CD8-positive, alpha-beta T cell (primary cell): ENCODE measurements at regions of chr11 and their contacts with region 1.

Region 1: DNA sequence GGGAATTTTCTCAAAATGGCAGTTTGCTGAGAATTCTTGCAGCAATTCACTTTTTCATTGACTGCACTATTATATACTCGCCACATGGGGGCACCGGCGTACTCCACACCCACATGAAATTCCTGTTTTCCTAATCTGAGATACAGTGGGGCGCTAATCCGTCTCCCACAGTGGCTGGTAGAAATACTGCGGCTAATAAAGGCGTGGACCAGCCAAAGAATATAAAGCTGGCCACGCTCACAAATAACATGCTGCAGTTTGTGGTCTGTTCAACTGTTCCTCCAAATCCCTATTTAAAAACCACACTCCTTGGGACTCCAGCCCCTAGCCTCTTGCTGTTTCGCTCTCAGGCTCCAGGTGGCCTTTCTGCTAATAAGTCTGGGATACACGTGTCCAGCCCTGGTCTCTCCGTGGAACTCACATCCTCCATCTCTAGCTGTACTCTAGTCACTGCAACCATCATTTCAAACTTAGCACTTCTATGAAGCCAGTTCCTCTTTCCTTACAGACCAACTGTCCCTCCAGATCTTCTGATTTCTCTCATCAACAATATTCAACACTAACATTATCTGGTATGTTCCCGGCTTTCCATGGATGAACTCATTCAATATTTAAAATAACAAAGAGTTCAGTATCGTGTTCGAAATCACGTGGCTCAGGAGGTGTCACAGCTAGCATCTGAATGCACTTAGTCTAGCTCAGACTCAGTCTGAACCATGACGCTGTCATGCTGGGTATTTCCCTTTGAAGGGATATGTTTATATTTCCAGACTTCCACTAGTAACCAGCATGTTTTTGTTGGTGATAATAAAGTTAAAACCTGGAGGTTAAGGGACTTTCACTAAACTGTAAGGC is 22.0 kb downstream of the TBRG1 start:
- DNase-seq: peak in 6 of 9 experiments; percentile 4 to 67 (median 44)
- ATAC-seq: peak; percentile 79
- H3K4me3 ChIP-seq: no peak overlapping the region
- H3K4me3 Mint-ChIP-seq: no peak overlapping the region
- H3K27ac ChIP-seq: no peak overlapping the region
- H3K27ac Mint-ChIP-seq: no peak overlapping the region
- H3K4me1 ChIP-seq: no peaks in the 10 kb centered on the region
- H3K4me1 Mint-ChIP-seq: no peaks in the 10 kb centered on the region
- H3K27me3 ChIP-seq: no peaks in the 10 kb centered on the region
- H3K27me3 Mint-ChIP-seq: no peaks in the 10 kb centered on the region
- CTCF ChIP-seq: peak; percentile 79

Region 2: GRCh38 chr11:124622531-124623451 is 21.9 kb before region 1 on chr11 and contains the start of gene TBRG1:
- CTCF ChIA-PET with region 1: interaction called, 3 read pairs
- POLR2A ChIA-PET with region 1: interaction called, 5 read pairs
- intact Hi-C with region 1: loop called in 1 of 2 experiments (anchors 1 kb)
- DNase-seq: peak; percentile 62 to 95 (median 84)
- ATAC-seq: peak; percentile 97
- H3K4me3 ChIP-seq: peak within 1 kb of the TSS; percentile 94 to 100
- H3K4me3 Mint-ChIP-seq: peak within 1 kb of the TSS; percentile 97
- H3K27ac ChIP-seq: peak within 1 kb of the TSS; percentile 95 to 97
- H3K27ac Mint-ChIP-seq: peak within 1 kb of the TSS; percentile 99
- H3K4me1 ChIP-seq: peaks cover 16% of the 10 kb centered on the region
- H3K4me1 Mint-ChIP-seq: peaks cover 43% of the 10 kb centered on the region
- H3K27me3 ChIP-seq: no peaks in the 10 kb centered on the region
- H3K27me3 Mint-ChIP-seq: peaks cover 6% of the 10 kb centered on the region
- CTCF ChIP-seq: no peak
- total RNA-seq, gene TBRG1: 59.2 to 61.0 TPM

Region 3: GRCh38 chr11:124662106-124662505 is 17.5 kb after region 1 on chr11:
- CTCF ChIA-PET with region 1: interaction called, 20 read pairs
- POLR2A ChIA-PET with region 1: no interaction called
- intact Hi-C with region 1: no loop called
- DNase-seq: no peak
- ATAC-seq: no peak
- H3K4me3 ChIP-seq: no peak overlapping the region
- H3K4me3 Mint-ChIP-seq: no peak overlapping the region
- H3K27ac ChIP-seq: no peak overlapping the region
- H3K27ac Mint-ChIP-seq: no peak overlapping the region
- H3K4me1 ChIP-seq: no peaks in the 10 kb centered on the region
- H3K4me1 Mint-ChIP-seq: no peaks in the 10 kb centered on the region
- H3K27me3 ChIP-seq: no peaks in the 10 kb centered on the region
- H3K27me3 Mint-ChIP-seq: no peaks in the 10 kb centered on the region
- CTCF ChIP-seq: no peak

Region 4: DNA sequence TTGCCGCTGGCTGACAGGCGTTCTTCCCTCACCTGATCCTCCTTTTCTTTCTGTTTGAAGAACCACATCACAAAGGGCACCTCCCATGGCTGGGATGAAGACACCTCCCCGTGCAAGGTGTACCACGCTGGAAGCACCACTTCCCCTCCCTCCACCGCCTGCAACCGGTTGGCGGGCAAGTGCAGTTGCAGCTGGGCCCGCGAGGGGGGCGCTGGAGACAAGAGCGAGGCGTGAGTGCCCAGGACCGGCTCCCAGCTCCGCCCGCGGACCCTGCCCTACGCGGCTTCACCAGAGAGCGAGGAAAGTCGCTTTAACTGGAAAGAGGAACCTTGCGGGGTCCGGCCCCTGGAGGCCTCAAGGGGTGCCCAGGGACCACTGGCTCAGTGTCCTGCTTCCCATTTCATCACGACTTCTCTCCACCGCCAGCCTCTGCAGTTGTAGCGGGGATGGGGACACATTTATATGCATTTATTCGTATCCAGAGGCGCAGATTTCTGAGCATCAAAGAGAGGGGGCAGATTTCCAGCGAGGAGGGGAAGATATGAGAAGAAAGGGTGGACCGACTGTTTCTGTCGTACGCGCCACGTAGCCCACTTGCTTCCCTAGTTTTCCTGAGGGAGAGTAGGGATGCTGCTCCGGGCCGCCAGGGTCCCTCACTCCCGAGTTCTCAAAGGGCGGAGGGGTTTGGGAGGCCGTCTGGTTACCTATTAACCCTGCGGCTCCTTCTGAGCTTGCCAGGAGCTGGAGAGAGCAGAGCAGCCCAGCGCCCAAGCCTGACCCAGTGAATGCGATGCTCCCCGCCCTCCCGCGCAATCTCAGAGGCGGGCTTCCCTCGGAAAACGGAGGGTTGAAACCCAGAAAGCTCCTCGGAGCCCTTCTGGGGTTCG is 113.9 kb after region 1 on chr11:
- CTCF ChIA-PET with region 1: interaction called, 4 read pairs
- POLR2A ChIA-PET with region 1: no interaction called
- intact Hi-C with region 1: loop called in 1 of 2 experiments (anchors 1 kb)
- DNase-seq: peak; percentile 42 to 78 (median 70)
- ATAC-seq: peak; percentile 72
- H3K4me3 ChIP-seq: peak overlapping the region; percentile 6 to 16
- H3K4me3 Mint-ChIP-seq: peak overlapping the region; percentile 58
- H3K27ac ChIP-seq: no peak overlapping the region
- H3K27ac Mint-ChIP-seq: no peak overlapping the region
- H3K4me1 ChIP-seq: peaks cover 34% of the 10 kb centered on the region
- H3K4me1 Mint-ChIP-seq: peaks cover 33% of the 10 kb centered on the region
- H3K27me3 ChIP-seq: peaks cover 32 to 39% of the 10 kb centered on the region in 2 experiments
- H3K27me3 Mint-ChIP-seq: peaks cover 40% of the 10 kb centered on the region
- CTCF ChIP-seq: peak; percentile 81